ENCODE measurements at regions of chr2 and their contacts with region 1.

Region 1: GRCh38 chr2:96208143-96209010 is at the start of gene STARD7:
- DNase-seq: peak; percentile 98
- H3K4me3 Mint-ChIP-seq: peak within 1 kb of the TSS; percentile 80
- H3K27ac Mint-ChIP-seq: peak within 1 kb of the TSS; percentile 59
- H3K4me1 Mint-ChIP-seq: peaks cover 35% of the 10 kb centered on the region
- H3K27me3 Mint-ChIP-seq: no peaks in the 10 kb centered on the region
- CTCF ChIP-seq: no peak
- total RNA-seq, gene STARD7: 84.1 and 105 TPM in 2 replicates

Region 2: DNA sequence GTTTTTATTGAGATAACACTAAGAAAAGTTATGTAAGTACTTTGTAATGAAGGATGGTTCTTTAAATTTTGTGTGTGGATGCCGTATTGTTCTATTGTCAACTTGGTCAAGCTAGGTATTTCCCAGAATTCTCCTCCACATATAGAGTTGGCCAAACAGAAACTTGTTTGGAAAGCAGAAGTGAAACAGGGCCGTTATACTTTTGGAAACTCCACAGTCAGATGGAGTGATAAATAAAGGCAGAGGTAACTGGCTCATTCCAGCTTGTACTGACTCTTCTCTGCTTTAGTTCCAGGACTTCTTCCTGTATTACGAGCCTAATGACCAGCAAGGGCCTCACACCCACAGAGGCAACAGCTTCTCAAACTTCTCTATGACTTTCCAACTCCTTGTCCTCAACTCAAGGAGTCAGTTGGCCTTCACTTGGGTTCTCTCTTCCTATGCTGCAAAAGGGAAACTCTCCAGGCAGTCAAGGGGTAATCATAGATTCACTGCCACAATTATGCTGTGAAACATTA is 16.7 kb after region 1 on chr2:
- CTCF ChIA-PET with region 1: interaction called, 4 read pairs
- POLR2A ChIA-PET with region 1: interaction called, 12 read pairs
- intact Hi-C with region 1: no loop called
- DNase-seq: no peak
- H3K4me3 Mint-ChIP-seq: no peak overlapping the region
- H3K27ac Mint-ChIP-seq: no peak overlapping the region
- H3K4me1 Mint-ChIP-seq: no peaks in the 10 kb centered on the region
- H3K27me3 Mint-ChIP-seq: no peaks in the 10 kb centered on the region
- CTCF ChIP-seq: no peak

Region 3: DNA sequence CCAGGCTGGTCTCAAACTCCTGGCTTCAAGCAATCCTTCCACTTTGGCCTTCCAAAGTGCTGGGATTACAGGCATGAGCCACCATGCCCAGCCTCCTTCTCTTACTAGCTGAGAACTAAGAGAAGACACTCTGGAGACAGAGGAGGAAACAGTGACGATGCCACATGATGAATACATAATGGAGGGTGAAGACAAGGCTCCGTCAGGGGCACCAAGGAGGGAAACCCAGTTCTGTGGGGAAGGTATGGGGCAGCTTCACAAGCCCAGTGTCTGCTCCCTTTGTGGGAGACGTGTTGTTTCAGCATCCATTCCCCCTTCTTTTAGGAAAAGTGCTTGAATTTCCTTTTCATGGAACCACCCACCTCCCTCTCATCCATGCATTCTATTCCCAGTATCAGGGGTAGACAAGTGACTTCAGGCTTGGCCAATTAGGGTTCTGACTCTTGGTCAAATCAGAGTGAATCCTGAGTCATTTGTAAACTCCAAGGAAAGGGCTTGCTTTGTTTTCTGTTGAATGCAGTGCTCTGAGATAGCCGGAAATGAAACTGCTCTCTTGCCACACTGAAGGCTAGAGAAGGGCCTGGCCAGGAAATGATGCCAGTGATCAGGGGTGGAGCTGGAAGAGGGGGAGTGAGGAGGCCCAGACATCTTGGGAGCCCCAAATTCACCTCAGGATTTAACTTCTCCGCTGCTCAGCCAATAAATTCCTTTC is 33.7 kb after region 1 on chr2:
- CTCF ChIA-PET with region 1: interaction called, 5 read pairs
- POLR2A ChIA-PET with region 1: interaction called, 20 read pairs
- intact Hi-C with region 1: no loop called
- DNase-seq: peak; percentile 83
- H3K4me3 Mint-ChIP-seq: no peak overlapping the region
- H3K27ac Mint-ChIP-seq: peak overlapping the region; percentile 35
- H3K4me1 Mint-ChIP-seq: peaks cover 9% of the 10 kb centered on the region
- H3K27me3 Mint-ChIP-seq: no peaks in the 10 kb centered on the region
- CTCF ChIP-seq: no peak

Region 4: GRCh38 chr2:96265840-96266679 is 57.7 kb after region 1 on chr2 and contains the starts of genes CIAO1 and TMEM127:
- CTCF ChIA-PET with region 1: interaction called, 7 read pairs
- POLR2A ChIA-PET with region 1: interaction called, 114 read pairs
- intact Hi-C with region 1: no loop called
- DNase-seq: peak; percentile 98
- H3K4me3 Mint-ChIP-seq: peak within 1 kb of the TSS; percentile 93
- H3K27ac Mint-ChIP-seq: peak within 1 kb of the TSS; percentile 68
- H3K4me1 Mint-ChIP-seq: peaks cover 25% of the 10 kb centered on the region
- H3K27me3 Mint-ChIP-seq: no peaks in the 10 kb centered on the region
- CTCF ChIP-seq: no peak
- total RNA-seq, gene CIAO1: 62.3 and 63.3 TPM in 2 replicates
- total RNA-seq, gene TMEM127: 31.5 and 40.0 TPM in 2 replicates

Region 5: GRCh38 chr2:96336104-96336775 is 127.9 kb after region 1 on chr2:
- CTCF ChIA-PET with region 1: no interaction called
- POLR2A ChIA-PET with region 1: interaction called, 10 read pairs
- intact Hi-C with region 1: no loop called
- DNase-seq: no peak
- H3K4me3 Mint-ChIP-seq: peak overlapping the region; percentile 68
- H3K27ac Mint-ChIP-seq: peak overlapping the region; percentile 39
- H3K4me1 Mint-ChIP-seq: peaks cover 42% of the 10 kb centered on the region
- H3K27me3 Mint-ChIP-seq: no peaks in the 10 kb centered on the region
- CTCF ChIP-seq: no peak

Region 6: DNA sequence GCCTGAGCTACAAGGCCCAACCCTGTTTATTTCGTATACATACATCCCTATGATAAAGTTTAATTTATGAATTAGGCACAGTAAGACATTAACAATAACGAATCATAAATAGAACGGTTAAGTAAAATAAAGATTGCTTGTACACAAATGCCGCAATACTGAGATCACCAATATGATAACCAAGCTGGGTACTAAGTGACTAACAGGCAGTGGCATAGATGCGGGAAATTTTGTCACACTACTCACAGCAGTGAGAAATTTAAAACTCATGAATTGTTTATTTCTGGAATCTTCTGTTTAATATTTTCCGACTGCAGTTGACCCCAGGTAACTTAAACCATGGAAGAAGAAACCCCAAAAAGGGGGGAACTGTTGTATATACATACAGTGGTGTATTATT is 263.4 kb after region 1 on chr2:
- CTCF ChIA-PET with region 1: no interaction called
- POLR2A ChIA-PET with region 1: no interaction called
- intact Hi-C with region 1: no loop called
- DNase-seq: no peak
- H3K4me3 Mint-ChIP-seq: no peak overlapping the region
- H3K27ac Mint-ChIP-seq: no peak overlapping the region
- H3K4me1 Mint-ChIP-seq: no peaks in the 10 kb centered on the region
- H3K27me3 Mint-ChIP-seq: peaks cover 13% of the 10 kb centered on the region
- CTCF ChIP-seq: no peak